Esophagus squamous epithelium (tissue), 5 donors: ENCODE measurements at regions of chr20 and their contacts with region 1.

Region 1: GRCh38 chr20:31605031-31605901 is at the start of gene ID1:
- DNase-seq: peak; percentile 68
- H3K4me3 ChIP-seq: peak within 1 kb of the TSS; percentile 75 to 91 (median 82)
- H3K27ac ChIP-seq: peak within 1 kb of the TSS; percentile 94 to 97 (median 96)
- H3K4me1 ChIP-seq: peaks cover 27 to 82% (median 29%) of the 10 kb centered on the region in 3 donors
- H3K27me3 ChIP-seq: peaks cover 0 to 9% (median 0%) of the 10 kb centered on the region in 4 donors
- CTCF ChIP-seq: no peak
- POLR2A ChIP-seq: peak; percentile 69 to 96 (median 80)
- total RNA-seq, gene ID1: 422 to 839 (median 555) TPM

Region 2: DNA sequence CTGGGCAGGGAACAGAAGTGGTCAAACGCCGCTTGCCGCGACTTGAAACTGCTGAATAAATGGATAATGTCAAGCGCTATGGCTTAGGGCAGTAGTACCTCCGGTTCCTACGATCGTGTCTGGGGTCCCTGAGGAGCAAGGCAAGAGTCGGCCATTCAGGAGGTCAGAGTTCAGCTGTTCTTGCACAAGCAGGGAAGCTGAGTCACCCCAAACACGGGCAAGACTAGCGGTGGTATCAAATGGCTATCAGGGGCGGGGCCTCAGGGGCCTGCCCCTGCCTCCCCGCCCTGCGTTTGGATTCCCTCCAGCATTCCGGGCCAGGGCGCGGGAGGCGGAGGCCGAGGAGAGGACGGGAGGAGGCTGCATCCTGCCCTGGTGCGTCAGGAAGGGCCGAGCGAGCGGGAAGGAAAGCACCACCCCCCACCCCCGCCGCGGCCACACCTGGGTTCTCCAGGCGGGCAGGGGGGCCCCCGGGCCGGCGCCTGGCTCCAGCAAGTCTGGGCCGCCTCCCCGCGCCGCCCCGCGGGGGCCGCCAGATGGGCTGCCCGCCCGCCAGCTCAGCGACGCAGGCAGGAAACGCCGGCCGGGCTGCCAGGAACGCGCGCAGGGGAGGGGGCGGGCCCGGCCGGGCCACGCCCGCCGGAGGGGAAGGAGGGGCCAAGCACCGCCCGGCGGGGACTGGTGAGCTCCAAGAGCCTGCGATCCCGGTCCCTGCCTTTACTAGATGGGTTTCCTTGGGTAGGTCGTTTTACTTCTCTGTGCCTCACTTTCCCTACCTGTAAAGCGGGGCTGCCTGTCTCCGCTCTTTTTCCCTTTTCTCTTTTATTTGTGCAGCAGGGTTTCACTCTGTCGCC is 32.3 kb before region 1 on chr20:
- intact Hi-C with region 1: loop called (anchors 5 kb)
- DNase-seq: peak; percentile 74
- H3K4me3 ChIP-seq: peak overlapping the region; percentile 37 to 68 (median 60)
- H3K27ac ChIP-seq: peak overlapping the region; percentile 86 to 96 (median 93)
- H3K4me1 ChIP-seq: peaks cover 22 to 60% (median 44%) of the 10 kb centered on the region in 3 donors
- H3K27me3 ChIP-seq: no peaks in the 10 kb centered on the region
- CTCF ChIP-seq: peak in 4 of 6 experiments; percentile 12 to 23 (median 22)
- POLR2A ChIP-seq: peak in 3 of 4 donors; percentile 49 to 88 (median 81)